ENCODE measurements at regions of chr20 and their contacts with region 1.

Region 1: GRCh38 chr20:62010551-62011402 is 54.9 kb downstream of the TAF4 start:
- H3K4me3 ChIP-seq: no peak overlapping the region
- H3K27ac ChIP-seq: no peak overlapping the region
- H3K4me1 ChIP-seq: no peaks in the 10 kb centered on the region
- CTCF ChIP-seq: peak; percentile 52

Region 2: GRCh38 chr20:62020935-62021701 is 10.3 kb after region 1 on chr20:
- CTCF ChIA-PET with region 1: interaction called, 10 read pairs
- POLR2A ChIA-PET with region 1: no interaction called
- H3K4me3 ChIP-seq: no peak overlapping the region
- H3K27ac ChIP-seq: no peak overlapping the region
- H3K4me1 ChIP-seq: no peaks in the 10 kb centered on the region; the same call in 1 of the 2 replicates
- CTCF ChIP-seq: no peak

Region 3: GRCh38 chr20:62136283-62137091 is 125.7 kb after region 1 on chr20:
- CTCF ChIA-PET with region 1: interaction called, 33 read pairs
- POLR2A ChIA-PET with region 1: interaction called, 5 read pairs
- H3K4me3 ChIP-seq: no peak overlapping the region
- H3K27ac ChIP-seq: peak overlapping the region; percentile 42; the same call in 1 of the 2 replicates
- H3K4me1 ChIP-seq: no peaks in the 10 kb centered on the region
- CTCF ChIP-seq: peak; percentile 57

Region 4: DNA sequence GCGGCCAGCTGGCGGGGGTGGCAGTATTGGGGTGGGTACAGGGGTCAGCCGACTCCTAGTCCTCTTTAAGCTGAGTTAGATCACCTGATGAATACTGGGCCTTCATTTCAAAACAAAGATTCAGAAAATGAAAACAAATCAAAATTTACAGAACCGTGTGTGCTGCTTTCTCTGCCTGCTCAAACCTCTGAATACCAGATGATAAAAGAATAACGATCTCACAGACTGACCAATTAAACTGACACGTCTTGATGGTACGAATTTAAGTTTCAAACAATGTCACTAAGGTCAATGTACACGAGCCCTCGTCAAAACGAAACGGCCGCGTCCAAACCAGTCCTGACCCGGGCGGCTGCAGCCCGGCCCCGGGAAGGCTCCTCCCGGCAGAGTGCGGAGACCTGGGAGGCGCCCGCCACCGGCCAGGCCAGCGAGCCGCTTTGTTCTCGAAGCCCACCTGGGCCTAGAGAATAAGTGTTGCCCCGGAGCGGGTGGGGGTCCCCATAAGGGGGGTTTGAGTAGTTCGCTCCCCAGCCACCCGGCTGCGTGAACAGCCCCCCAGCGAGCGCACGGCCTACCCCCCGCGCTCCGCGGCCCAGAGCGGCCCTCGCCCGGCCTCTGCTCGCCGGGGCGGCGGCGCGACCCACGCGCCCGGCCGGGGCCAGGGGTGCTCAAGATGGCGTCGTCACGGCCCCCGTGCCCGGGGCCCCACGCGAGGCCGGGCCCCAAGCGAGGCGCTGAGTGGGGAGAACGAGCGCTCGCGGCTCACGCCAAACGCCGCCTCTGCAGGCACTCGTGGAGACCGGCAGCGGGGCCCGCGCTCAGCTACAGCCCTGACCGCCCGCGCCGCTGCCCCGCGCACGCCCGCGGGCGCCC is 131.7 kb after region 1 on chr20:
- CTCF ChIA-PET with region 1: interaction called, 33 read pairs
- POLR2A ChIA-PET with region 1: interaction called, 3 read pairs
- H3K4me3 ChIP-seq: peak overlapping the region; percentile 89
- H3K27ac ChIP-seq: peak overlapping the region; percentile 84
- H3K4me1 ChIP-seq: no peaks in the 10 kb centered on the region
- CTCF ChIP-seq: no peak

Region 5: DNA sequence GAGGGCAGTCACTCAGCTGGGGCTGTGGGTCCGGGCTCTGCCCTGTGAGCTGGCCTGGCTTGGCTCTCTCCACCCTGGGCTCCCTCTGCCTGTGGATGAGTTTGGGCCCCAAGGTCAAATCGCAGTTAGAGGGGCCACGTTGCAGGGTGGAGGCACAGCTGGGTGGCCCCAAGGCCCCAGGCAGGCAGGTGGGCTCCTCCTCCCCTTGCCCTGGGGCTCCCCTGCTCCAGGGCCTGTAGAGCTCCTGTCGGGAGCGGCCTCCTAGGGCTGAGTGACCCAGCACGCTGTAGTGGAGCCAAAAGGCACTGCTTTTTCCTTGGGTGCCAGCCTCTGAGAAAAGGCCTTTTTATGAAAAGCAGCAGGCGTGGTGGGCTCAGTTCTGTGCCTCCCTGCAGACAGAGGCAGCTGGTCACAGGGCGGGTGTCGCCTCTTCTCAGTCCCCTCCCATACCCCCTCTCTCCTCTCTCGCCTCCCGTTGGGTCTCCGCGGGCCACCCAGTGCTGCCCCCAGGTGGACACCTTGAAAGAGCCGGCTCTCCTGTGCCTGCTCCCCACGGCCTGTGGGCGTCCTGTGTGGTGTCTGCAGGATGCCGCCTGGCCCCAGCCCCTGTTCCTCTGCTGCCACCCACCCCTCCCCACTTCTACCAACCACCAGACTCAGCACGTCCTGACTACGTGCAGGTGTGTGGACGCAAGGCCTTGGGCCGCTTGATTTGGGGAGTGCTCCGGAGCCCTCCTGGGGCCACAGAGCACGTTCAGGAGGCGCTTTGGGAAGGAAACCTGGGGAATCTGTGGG is 146.0 kb after region 1 on chr20:
- CTCF ChIA-PET with region 1: interaction called, 13 read pairs
- POLR2A ChIA-PET with region 1: no interaction called
- H3K4me3 ChIP-seq: no peak overlapping the region
- H3K27ac ChIP-seq: no peak overlapping the region
- H3K4me1 ChIP-seq: no peaks in the 10 kb centered on the region
- CTCF ChIP-seq: peak; percentile 85